ENCODE measurements at regions of chr19 and their contacts with region 1.

Region 1: GRCh38 chr19:7943444-7944176 is at the start of gene TIMM44:
- DNase-seq: peak; percentile 100
- H3K4me3 ChIP-seq: peak within 1 kb of the TSS; percentile 94
- H3K27ac ChIP-seq: peak within 1 kb of the TSS; percentile 69
- H3K4me1 ChIP-seq: peaks cover 18% of the 10 kb centered on the region
- CTCF ChIP-seq: no peak
- total RNA-seq, gene TIMM44: 86.0 and 89.0 TPM in 2 replicates

Region 2: DNA sequence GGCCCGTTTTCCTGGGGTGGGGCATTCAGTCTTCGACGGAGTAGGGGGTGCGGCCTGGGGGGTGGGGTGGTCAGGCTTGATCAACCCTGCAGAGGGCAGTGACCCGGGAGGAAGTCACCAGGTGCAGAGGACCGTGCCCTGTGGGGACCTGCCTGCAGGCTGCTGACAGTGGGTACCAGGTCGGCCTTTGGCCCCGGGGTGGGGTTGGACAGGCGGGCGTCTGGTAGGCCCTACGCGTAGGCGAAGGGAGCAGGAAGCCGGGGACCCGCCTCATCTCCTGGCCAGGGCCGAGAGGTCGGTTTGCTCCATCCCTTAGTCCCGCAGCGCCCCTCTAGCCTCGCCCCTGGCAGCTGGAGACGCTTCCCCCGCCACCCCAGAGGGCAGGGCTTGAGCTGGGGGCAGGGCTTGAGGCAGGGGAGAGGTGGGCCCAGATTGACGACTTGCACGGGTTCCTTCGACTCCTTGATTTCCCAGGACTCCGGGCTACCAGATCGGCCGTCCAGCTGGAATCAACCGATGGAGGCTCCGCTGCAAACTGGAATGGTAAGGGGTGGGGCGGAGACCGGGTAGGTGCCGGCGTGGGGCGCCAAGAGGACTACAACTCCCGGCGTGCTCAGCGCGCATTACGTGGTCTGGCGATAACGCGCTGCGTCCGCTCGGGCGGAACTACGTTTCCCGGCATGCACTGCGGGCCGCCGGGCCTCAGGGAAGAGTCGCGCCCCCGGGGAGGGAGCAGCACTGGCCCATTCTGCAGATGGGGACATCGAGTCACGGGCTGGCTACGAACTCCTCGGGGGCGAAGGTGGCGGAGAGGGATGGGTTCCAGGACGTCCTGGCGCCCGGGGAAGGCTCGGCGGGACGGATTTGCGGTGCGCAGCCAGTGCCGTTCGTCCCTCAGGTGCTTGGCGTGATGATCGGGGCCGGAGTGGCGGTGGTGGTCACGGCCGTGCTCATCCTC is 408.3 kb before region 1 on chr19 and contains the start of gene PNPLA6:
- CTCF ChIA-PET with region 1: no interaction called
- POLR2A ChIA-PET with region 1: no interaction called
- intact Hi-C with region 1: no loop called
- DNase-seq: peak; percentile 95
- H3K4me3 ChIP-seq: peak within 1 kb of the TSS; percentile 93
- H3K27ac ChIP-seq: peak within 1 kb of the TSS; percentile 8
- H3K4me1 ChIP-seq: peaks cover 13% of the 10 kb centered on the region
- CTCF ChIP-seq: no peak
- total RNA-seq, gene PNPLA6: 50.6 and 54.3 TPM in 2 replicates

Region 3: GRCh38 chr19:7783991-7784421 is 159.6 kb before region 1 on chr19:
- CTCF ChIA-PET with region 1: no interaction called
- POLR2A ChIA-PET with region 1: no interaction called
- intact Hi-C with region 1: no loop called
- DNase-seq: no peak
- H3K4me3 ChIP-seq: no peak overlapping the region
- H3K27ac ChIP-seq: no peak overlapping the region
- H3K4me1 ChIP-seq: no peaks in the 10 kb centered on the region
- CTCF ChIP-seq: no peak

Region 4: GRCh38 chr19:7852851-7853769 is 90.5 kb before region 1 on chr19:
- CTCF ChIA-PET with region 1: interaction called, 3 read pairs
- POLR2A ChIA-PET with region 1: no interaction called
- intact Hi-C with region 1: loop called (anchors 5 kb)
- DNase-seq: peak; percentile 74
- H3K4me3 ChIP-seq: no peak overlapping the region
- H3K27ac ChIP-seq: no peak overlapping the region
- H3K4me1 ChIP-seq: peaks cover 3% of the 10 kb centered on the region
- CTCF ChIP-seq: peak; percentile 87

Region 5: GRCh38 chr19:7970716-7971448 is 27.3 kb after region 1 on chr19:
- CTCF ChIA-PET with region 1: no interaction called
- POLR2A ChIA-PET with region 1: no interaction called
- intact Hi-C with region 1: no loop called
- DNase-seq: peak; percentile 45
- H3K4me3 ChIP-seq: no peak overlapping the region
- H3K27ac ChIP-seq: no peak overlapping the region
- H3K4me1 ChIP-seq: no peaks in the 10 kb centered on the region
- CTCF ChIP-seq: peak; percentile 88

Region 6: DNA sequence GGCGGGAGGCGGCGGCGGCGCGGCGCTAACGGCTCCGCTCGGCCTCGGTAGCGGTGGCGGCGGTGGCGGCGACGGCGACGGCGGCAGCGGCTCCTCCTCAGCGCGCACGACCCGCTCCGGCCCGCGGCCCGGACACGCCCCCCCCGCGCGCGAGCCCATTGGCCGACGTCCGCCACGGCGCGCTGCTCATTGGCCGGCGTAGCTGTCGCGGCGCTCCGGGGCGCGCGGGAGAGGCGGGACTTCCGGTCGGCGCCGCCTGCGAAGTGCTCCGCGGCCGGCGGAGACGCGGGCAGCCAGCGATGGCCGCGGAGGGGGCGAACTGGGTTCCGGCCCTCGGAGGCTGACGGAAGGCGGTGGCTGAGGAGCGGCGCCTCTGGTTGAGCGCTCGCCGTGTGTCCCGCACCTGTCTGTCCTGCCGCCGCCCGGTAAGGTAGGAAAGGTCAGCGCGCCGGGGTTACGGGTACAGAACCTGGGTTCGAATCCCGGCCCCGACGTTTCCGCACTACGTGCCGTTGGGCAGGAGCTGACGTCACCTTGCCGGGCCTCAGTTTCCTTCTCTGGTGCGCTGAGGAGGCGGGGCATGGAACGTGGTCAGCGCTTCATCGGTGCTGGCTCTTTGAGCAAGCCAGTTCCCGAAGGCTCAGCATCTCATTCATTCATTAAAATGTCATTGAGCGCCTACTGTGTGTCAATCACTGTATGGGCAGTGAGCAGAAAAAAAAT is 62.1 kb after region 1 on chr19 and contains the start of gene ELAVL1:
- CTCF ChIA-PET with region 1: interaction called, 3 read pairs
- POLR2A ChIA-PET with region 1: interaction called, 3 read pairs
- intact Hi-C with region 1: loop called (anchors 2 kb)
- DNase-seq: peak; percentile 95
- H3K4me3 ChIP-seq: peak within 1 kb of the TSS; percentile 100
- H3K27ac ChIP-seq: peak within 1 kb of the TSS; percentile 64
- H3K4me1 ChIP-seq: peaks cover 26% of the 10 kb centered on the region
- CTCF ChIP-seq: no peak
- total RNA-seq, gene ELAVL1: 43.5 and 65.4 TPM in 2 replicates

Region 7: DNA sequence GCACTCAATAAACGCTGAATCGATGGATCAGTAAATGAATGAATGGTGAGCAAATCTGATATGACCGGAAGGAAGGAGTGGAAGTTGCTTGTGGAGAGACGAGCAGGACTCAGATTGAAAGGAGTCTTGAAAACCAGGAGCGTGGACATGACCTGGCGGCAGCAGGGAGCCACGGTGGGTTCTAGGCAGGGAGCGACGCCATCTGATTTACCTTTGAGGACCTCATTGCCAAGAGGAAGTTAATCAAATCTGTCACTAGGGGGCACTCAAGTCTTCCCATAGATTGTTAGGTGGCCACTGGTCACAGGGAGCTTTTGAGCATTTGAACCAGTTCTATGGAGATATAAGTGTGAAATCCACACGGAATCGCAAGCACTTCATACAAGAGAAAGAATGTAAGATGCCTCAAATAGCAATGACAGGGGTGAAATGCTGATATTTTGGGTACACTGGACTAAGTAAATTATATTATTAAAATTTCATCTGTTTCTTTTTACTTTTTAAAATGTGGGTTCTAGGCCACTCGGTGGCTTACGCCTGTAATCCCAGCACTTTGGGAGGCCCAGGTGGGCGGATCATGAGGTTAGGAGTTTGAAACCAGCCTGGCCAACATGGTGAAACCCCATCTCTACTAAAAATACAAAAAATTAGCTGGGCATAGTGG is 214.9 kb after region 1 on chr19:
- CTCF ChIA-PET with region 1: no interaction called
- POLR2A ChIA-PET with region 1: no interaction called
- intact Hi-C with region 1: loop called (anchors 5 kb)
- DNase-seq: peak; percentile 89
- H3K4me3 ChIP-seq: no peak overlapping the region
- H3K27ac ChIP-seq: no peak overlapping the region
- H3K4me1 ChIP-seq: peaks cover 16% of the 10 kb centered on the region
- CTCF ChIP-seq: peak; percentile 88

Region 8: DNA sequence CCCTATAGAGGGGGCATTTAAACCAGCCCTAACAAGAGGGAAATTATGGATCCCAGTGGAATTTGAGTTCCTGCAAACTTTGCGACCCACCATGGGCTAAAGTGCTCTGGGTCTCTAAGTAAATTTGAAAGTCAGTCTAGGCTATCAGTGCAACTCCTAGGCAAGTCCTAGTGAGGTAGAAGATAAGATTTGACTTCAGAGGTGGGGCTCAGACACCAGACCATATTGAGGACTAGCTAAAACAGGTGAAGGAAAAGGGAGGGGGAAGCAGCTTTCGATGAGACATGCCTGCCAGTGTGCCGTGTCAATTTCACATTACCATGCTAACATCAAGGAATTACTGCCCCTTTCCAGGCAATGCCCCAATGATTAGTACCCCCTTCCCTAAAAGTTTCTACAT is 326.1 kb after region 1 on chr19:
- CTCF ChIA-PET with region 1: no interaction called
- POLR2A ChIA-PET with region 1: no interaction called
- intact Hi-C with region 1: loop called (anchors 5 kb)
- DNase-seq: no peak
- H3K4me3 ChIP-seq: no peak overlapping the region
- H3K27ac ChIP-seq: no peak overlapping the region
- H3K4me1 ChIP-seq: peaks cover 27% of the 10 kb centered on the region
- CTCF ChIP-seq: no peak